Endothelial cell of umbilical vein (primary cell): ENCODE measurements at regions of chr5 and their contacts with region 1.

Region 1: DNA sequence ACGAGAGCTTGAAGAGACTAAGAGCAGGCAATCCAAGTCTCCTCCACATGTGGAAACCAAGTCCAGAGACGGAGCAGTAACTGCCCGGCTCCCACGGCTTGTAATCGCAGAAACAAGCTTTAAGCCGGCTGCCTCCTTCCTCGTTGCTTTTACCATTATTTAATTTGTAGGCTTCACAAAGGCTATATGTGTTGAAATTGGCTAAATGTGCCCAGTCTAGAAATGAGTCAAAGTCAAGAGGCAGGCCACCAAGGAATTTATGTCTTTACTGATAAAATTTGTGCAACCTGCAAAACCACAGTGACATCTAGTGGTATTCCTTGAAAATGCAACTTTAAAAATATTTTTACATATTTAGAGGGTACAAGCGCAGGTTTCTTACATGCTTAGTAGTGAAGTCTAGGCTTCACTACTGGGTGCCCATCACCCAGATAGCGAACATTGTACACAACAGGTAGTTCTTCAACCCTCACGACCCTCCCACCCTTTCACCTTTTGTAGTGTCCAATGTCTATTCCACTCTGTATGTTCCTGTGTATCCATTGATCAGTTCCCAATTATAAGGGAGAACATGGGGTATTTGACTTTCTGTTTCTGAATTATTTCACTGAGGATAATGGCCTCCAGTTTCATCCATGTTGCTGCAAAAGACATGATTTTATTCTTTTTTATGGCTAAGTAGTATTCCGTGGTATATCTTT is 33.5 kb upstream of the EBF1 start:
- DNase-seq: peak; percentile 62
- H3K4me3 ChIP-seq: no peak overlapping the region
- H3K27ac ChIP-seq: no peak overlapping the region
- H3K4me1 ChIP-seq: no peaks in the 10 kb centered on the region
- H3K27me3 ChIP-seq: peaks cover 2 to 9% of the 10 kb centered on the region in 2 experiments
- CTCF ChIP-seq: peak; percentile 45 to 46
- POLR2A ChIP-seq: no peak

Region 2: DNA sequence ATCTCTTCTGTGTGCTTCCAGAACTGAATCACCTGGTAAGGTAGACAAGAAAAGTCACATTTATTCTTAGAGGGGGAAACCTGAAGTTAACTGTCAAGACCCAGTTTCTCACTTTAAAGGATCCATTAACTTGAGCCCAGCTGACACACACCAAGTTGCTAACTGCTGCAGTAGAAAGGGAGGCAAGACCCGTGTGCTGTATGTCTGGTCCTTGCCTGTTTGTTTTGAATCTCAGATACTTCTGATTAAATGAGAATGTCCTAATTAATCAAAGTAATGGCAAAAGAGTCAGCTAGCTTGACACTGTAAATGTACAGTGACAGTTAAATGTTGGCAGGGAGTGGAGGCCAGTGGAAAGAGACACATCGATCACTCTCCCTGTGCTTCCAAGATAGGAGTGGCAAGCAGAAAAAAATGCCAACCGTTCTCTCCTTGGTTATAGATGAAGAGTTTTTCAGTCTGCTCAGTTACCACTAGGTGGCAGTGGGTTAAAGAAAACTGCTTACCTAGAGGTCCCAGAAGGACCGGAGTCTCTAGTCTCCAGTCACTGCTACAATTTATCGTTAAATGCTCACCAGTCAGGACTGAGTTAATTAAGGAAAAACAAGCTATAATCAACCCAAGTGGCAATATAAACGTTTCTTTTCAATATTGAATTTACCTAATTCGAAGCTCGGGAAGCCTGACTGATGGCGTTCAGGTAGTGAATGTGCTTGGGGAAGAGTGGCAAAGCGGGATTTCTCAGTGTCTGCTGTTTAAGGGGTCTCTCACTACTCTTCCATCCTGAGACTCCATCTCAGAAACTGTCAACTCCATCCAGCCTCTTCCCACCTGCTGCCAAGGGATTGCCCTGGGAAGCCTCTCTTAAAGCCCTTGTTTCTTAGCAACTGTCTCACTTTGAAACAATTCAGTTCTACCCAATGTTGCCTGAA is 1371.2 kb before region 1 on chr5:
- CTCF ChIA-PET with region 1: interaction called, 4 read pairs
- POLR2A ChIA-PET with region 1: no interaction called
- dilution Hi-C with region 1: no loop called
- intact Hi-C with region 1: loop called (anchors 1 kb)
- DNase-seq: peak; percentile 67
- H3K4me3 ChIP-seq: no peak overlapping the region
- H3K27ac ChIP-seq: no peak overlapping the region
- H3K4me1 ChIP-seq: no peaks in the 10 kb centered on the region
- H3K27me3 ChIP-seq: no peaks in the 10 kb centered on the region
- CTCF ChIP-seq: peak; percentile 71 to 79
- POLR2A ChIP-seq: no peak

Region 3: DNA sequence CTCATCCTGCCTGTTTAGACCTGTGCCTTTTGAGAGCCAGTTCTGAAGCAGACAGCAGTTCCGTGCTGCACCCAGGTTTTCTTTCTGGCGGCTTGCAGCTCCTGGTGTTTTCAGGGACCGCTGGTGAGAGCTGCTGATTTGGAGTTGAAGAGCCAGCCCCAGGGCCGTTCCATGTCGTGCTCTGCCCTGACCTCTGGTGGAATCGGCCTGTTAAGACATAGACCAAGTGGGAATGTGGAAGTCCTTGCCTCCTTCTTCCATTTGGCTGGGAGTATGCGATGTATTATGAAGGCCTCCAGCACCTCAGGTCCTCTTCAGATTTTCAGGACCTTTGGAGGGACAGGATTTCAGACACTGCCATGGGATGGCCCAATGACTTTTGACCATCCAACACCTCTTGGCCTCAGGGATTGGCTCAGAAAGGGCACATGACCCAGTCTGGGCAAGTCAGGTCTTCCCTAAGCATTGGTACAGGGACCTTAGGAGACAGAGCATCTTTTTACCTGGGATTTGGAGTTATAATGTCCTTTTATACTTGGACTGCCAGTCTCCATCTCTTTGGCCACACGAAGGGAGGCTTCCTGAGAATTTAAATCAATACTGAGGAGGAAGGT is 1138.2 kb before region 1 on chr5:
- CTCF ChIA-PET with region 1: interaction called, 4 read pairs
- POLR2A ChIA-PET with region 1: no interaction called
- dilution Hi-C with region 1: no loop called
- intact Hi-C with region 1: loop called (anchors 5 kb)
- DNase-seq: peak; percentile 63
- H3K4me3 ChIP-seq: no peak overlapping the region
- H3K27ac ChIP-seq: no peak overlapping the region
- H3K4me1 ChIP-seq: no peaks in the 10 kb centered on the region
- H3K27me3 ChIP-seq: no peaks in the 10 kb centered on the region
- CTCF ChIP-seq: peak; percentile 63 to 79
- POLR2A ChIP-seq: no peak

Region 4: DNA sequence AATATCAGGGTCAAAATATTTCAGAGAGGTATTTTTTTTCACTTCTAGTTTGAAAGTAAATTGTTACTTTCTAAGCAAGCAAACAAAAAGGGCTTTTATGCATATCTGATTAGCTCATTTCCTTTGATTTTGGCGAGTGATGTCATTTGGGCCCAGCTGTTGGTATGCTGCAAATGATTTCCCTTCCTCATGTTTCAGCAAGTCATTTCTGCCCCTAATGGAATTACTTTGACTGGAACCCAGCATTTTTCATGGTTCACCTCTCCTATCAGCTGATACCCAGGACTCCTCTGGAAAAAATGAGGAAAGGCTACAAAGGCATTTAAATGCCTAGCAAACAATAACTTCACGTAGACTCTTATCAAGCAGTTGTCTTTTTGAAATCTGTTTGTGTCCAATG is 534.0 kb before region 1 on chr5:
- CTCF ChIA-PET with region 1: no interaction called
- POLR2A ChIA-PET with region 1: no interaction called
- dilution Hi-C with region 1: no loop called
- intact Hi-C with region 1: no loop called
- DNase-seq: no peak
- H3K4me3 ChIP-seq: no peak overlapping the region
- H3K27ac ChIP-seq: no peak overlapping the region
- H3K4me1 ChIP-seq: no peaks in the 10 kb centered on the region
- H3K27me3 ChIP-seq: no peaks in the 10 kb centered on the region
- CTCF ChIP-seq: no peak
- POLR2A ChIP-seq: no peak

Region 5: GRCh38 chr5:158701406-158702177 is 431.6 kb before region 1 on chr5:
- CTCF ChIA-PET with region 1: interaction called, 40 read pairs
- POLR2A ChIA-PET with region 1: interaction called, 6 read pairs
- dilution Hi-C with region 1: loop called (anchors 25 kb)
- intact Hi-C with region 1: no loop called
- DNase-seq: no peak
- H3K4me3 ChIP-seq: no peak overlapping the region
- H3K27ac ChIP-seq: no peak overlapping the region
- H3K4me1 ChIP-seq: no peaks in the 10 kb centered on the region
- H3K27me3 ChIP-seq: no peaks in the 10 kb centered on the region
- CTCF ChIP-seq: no peak
- POLR2A ChIP-seq: no peak